BJ (cell line): ENCODE measurements at regions of chr16 and their contacts with region 1.

Region 1: DNA sequence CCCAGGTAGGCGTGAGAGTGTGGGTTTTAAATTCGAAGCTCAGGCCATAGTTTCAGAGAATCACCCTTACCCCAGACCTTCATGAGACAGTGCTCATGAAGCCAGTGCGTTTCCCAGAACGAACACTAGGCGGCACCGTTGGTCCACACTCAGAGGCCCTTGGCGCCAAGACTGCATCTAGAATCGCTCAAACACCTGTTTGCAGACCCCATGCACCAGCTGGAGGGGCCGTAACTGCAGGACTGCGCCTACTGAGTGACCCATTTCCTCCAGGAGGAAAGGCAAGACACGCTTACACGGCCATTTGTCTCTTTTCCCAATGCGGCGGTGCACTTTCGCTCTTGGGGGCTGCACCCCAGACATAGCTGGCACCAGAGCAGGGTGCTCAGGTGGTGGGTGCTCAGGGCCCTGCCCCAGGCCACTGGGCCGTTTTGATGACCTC is 34.0 kb downstream of the ADGRG5 start:
- DNase-seq: no peak
- H3K4me3 ChIP-seq: no peak overlapping the region
- H3K27me3 ChIP-seq: peaks cover 4% of the 10 kb centered on the region
- CTCF ChIP-seq: peak; percentile 99

Region 2: GRCh38 chr16:57462209-57462977 is 114.1 kb before region 1 on chr16 and contains the start of gene POLR2C:
- CTCF ChIA-PET with region 1: no interaction called
- POLR2A ChIA-PET with region 1: no interaction called
- DNase-seq: no peak
- H3K4me3 ChIP-seq: peak within 1 kb of the TSS; percentile 93
- H3K27me3 ChIP-seq: no peaks in the 10 kb centered on the region
- CTCF ChIP-seq: peak; percentile 99
- polyA plus RNA-seq, gene POLR2C: 127 and 176 TPM in 2 replicates

Region 3: DNA sequence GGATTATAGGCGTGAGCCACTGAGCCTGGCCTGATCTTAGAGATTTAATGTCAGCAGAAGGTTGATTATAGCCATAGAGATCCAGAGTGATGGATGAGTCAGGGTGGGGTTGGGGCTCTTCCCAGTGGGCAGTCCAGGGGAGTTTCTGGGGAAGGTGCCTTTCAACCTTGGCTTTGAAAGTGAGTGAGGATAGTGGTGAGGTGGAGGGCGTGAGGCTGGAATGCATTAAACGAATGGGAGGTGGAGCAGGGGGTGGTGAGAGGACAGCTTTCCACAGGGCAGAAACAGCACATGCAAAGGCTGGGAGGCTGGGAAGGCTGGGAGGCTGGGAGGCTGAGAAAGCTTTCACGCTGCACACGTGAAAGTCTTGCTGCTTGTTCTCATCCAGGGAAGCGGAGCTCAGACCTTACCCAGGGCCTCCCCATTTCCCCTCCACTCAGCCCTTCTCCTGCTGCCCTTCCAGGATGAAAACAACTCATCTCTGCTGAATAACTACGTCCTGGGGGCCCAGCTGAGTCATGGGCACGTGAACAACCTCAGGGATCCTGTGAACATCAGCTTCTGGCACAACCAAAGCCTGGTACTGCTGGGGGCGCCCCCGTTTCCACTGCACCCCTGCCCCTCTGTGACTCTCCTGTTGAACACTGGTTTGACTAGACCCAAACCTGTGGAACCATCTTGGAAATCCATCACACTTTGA is 11.7 kb before region 1 on chr16:
- CTCF ChIA-PET with region 1: interaction called, 29 read pairs
- POLR2A ChIA-PET with region 1: no interaction called
- DNase-seq: no peak
- H3K4me3 ChIP-seq: no peak overlapping the region
- H3K27me3 ChIP-seq: peaks cover 7% of the 10 kb centered on the region; the same call in 1 of the 2 replicates
- CTCF ChIP-seq: no peak

Region 4: GRCh38 chr16:57600048-57600835 is 23.8 kb after region 1 on chr16:
- CTCF ChIA-PET with region 1: interaction called, 17 read pairs
- POLR2A ChIA-PET with region 1: no interaction called
- DNase-seq: no peak
- H3K4me3 ChIP-seq: no peak overlapping the region
- H3K27me3 ChIP-seq: peaks cover 7% of the 10 kb centered on the region
- CTCF ChIP-seq: peak; percentile 76

Region 5: DNA sequence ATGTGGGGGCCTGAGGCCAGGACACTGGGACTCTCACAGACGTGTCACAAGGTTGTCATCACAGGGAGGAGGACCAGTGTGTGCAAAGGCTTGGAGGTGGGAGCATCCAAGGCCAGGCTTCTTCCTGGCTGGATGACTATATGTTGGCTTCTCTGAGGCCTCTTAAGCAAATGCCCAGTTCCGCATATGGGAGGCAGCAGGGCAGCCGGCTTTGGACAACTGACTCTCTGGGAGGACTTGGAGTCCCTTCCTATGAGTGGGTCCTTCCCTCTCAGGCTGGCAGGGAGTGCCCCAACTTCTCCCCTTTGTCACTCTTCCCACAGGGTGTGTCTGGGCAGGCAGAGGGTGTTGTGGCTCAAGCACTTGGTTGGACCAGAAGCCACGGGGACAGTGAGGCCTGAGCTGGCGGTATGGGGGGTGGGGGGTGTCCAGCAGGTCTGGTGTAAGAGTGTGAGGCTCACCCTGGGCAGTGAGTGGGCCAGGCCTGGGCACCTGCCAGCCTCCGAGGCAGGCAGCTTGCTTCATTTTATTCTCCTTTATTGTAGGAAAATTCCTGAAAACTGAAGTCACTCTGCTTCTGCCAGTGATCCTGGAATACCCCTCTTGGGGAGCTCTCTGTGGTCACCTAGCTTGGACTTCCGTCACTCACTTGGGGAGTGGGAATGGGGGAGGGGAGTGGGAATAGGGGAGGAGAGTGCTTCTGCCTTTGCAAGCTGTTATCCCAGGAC is 66.9 kb after region 1 on chr16:
- CTCF ChIA-PET with region 1: interaction called, 126 read pairs
- POLR2A ChIA-PET with region 1: no interaction called
- DNase-seq: peak; percentile 29
- H3K4me3 ChIP-seq: no peak overlapping the region
- H3K27me3 ChIP-seq: no peaks in the 10 kb centered on the region
- CTCF ChIP-seq: no peak

Region 6: GRCh38 chr16:57653936-57654335 is 77.5 kb after region 1 on chr16:
- CTCF ChIA-PET with region 1: interaction called, 126 read pairs
- POLR2A ChIA-PET with region 1: no interaction called
- DNase-seq: no peak
- H3K4me3 ChIP-seq: no peak overlapping the region
- H3K27me3 ChIP-seq: no peaks in the 10 kb centered on the region
- CTCF ChIP-seq: no peak